PC-3 (cell line): ENCODE measurements at regions of chr7 and their contacts with region 1.

Region 1: GRCh38 chr7:6435486-6436384 is 12.0 kb downstream of the DAGLB start:
- DNase-seq: peak; percentile 86
- ATAC-seq: peak; percentile 89
- H3K4me3 ChIP-seq: no peak overlapping the region
- H3K27ac ChIP-seq: no peak overlapping the region
- H3K4me1 ChIP-seq: peaks cover 12% of the 10 kb centered on the region; the same call in 1 of the 2 replicates
- H3K27me3 ChIP-seq: no peaks in the 10 kb centered on the region
- CTCF ChIP-seq: peak; percentile 96

Region 2: DNA sequence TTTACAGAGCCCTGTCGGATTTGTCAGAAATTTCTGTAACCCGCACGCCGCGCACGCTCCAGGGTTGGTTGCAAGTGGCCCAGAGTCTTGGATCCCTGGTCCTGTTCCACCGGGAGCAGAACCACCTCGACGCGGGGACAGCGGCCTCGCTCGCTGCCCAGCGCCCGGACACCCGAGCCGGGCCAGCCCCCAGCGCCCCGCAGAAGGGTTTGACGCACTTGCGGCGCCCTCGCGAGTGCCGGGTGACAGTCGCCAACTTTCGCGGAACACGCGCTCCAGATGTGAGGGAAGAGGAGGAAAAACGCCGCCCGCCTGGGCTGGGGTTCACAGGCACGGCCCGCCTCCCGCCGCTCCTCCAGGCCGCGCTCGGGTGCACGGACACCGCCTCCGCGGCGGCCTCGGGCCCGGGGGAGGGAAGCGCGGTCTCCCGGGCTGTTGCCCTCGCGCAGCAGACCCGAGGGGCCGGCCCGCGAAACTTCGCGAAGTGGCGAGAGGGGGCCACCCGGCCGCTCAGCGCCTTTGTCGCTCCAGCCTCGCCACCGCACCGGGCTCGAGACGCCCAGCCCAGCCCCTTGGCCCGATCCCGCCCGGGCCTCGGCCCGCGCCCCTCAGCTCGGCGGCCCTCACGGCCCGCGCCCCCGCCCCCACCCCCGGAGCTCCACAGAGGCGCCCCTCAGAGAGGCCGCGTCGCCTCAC is 654.8 kb before region 1 on chr7:
- CTCF ChIA-PET with region 1: no interaction called
- POLR2A ChIA-PET with region 1: no interaction called
- intact Hi-C with region 1: no loop called
- DNase-seq: peak; percentile 21
- ATAC-seq: peak; percentile 62
- H3K4me3 ChIP-seq: peak overlapping the region; percentile 73
- H3K27ac ChIP-seq: peak overlapping the region; percentile 12; the same call in 1 of the 2 replicates
- H3K4me1 ChIP-seq: no peaks in the 10 kb centered on the region; the same call in 1 of the 2 replicates
- H3K27me3 ChIP-seq: no peaks in the 10 kb centered on the region
- CTCF ChIP-seq: no peak

Region 3: GRCh38 chr7:5854738-5855137 is 581.0 kb before region 1 on chr7:
- CTCF ChIA-PET with region 1: no interaction called
- POLR2A ChIA-PET with region 1: no interaction called
- intact Hi-C with region 1: loop called (anchors 5 kb)
- DNase-seq: no peak
- ATAC-seq: no peak
- H3K4me3 ChIP-seq: no peak overlapping the region
- H3K27ac ChIP-seq: no peak overlapping the region
- H3K4me1 ChIP-seq: no peaks in the 10 kb centered on the region
- H3K27me3 ChIP-seq: no peaks in the 10 kb centered on the region
- CTCF ChIP-seq: no peak

Region 4: DNA sequence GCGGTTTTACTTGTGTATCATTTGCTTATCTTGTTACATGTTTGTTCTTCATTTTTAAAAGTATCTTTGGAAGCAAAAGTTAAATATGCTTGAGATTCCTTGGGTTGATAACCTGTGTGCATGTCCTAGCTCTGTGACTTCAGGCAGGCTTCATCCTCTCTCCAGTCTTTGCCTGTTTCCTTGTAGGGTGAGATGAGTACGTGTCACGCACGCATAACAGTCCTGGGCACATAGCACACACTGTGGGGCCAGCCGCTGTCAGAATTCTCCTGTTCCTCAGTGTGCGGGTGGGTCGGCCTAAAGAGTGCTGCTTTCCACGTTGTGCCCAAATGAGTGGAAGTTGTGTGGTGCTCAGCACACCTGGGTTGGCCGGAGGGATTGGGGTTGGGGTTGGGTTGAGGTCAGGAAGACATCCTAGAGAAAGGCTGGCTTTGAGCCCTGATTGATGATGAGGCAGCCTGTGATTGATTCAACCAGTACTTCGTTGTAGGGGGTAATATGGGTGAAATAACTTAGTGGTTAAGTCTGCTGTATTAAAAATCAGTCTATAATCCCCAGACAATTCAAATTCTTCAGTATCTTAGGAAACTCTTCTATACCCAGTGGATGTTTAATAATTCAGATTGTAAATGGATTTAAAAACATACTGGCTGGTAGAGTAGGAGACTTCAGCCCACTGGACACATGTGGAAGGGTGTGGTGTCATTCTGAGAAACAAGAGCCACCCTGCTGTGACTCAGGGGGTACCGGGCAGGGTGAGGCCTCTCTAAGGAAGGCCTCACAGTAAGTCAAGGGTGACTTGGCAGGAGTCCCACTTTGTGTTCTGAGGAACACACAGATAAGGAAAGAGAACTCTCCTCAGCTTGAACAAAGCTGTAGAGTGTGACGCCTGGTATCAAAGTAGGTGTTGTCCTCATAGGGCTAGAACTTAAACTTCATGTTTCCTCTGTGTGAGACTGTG is 42.7 kb before region 1 on chr7:
- CTCF ChIA-PET with region 1: no interaction called
- POLR2A ChIA-PET with region 1: no interaction called
- intact Hi-C with region 1: loop called (anchors 5 kb)
- DNase-seq: peak; percentile 97
- ATAC-seq: peak; percentile 98
- H3K4me3 ChIP-seq: peak overlapping the region; percentile 41
- H3K27ac ChIP-seq: peak overlapping the region; percentile 98
- H3K4me1 ChIP-seq: peaks cover 45% of the 10 kb centered on the region
- H3K27me3 ChIP-seq: no peaks in the 10 kb centered on the region
- CTCF ChIP-seq: no peak

Region 5: GRCh38 chr7:6476596-6477299 is 41.0 kb after region 1 on chr7:
- CTCF ChIA-PET with region 1: no interaction called
- POLR2A ChIA-PET with region 1: no interaction called
- intact Hi-C with region 1: no loop called
- DNase-seq: no peak
- ATAC-seq: peak; percentile 10; the same call in 1 of the 2 replicates
- H3K4me3 ChIP-seq: no peak overlapping the region
- H3K27ac ChIP-seq: no peak overlapping the region
- H3K4me1 ChIP-seq: peaks cover 17% of the 10 kb centered on the region
- H3K27me3 ChIP-seq: no peaks in the 10 kb centered on the region
- CTCF ChIP-seq: no peak